Left colon (tissue), 2 donors: ENCODE measurements at regions of chr2 and their contacts with region 1.

Region 1: DNA sequence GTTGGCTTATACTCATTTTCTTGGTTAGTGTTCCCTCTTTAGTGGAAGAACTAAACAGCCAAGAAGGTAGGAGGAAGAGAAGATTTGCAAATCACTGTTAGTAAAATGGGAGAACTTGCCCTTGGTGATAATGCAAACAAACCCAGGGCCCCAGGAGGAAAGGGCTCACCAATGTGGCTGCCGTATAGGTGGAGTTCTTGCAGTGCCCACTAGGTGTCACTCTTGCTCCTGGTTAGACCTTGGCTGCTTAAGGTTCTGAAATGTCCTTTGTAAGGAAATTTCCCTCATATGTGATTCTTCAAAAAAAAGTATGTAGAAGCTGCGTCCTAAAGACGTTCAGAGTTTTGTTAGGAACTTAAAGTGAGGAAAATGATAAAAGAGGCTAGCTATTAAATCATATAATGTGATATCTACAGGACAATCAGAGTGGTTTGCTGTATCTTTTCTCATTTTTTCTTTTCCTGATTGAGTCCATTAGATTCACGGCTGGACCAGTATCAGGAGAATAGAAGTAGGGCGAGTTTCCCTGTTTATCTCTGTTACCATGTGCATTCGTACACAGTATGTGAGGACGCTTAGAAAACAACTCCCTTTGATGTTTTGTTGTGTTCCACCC is 48.6 kb downstream of the RPIA start:
- DNase-seq: peak; percentile 57 to 84
- ATAC-seq: peak; percentile 87

Region 2: DNA sequence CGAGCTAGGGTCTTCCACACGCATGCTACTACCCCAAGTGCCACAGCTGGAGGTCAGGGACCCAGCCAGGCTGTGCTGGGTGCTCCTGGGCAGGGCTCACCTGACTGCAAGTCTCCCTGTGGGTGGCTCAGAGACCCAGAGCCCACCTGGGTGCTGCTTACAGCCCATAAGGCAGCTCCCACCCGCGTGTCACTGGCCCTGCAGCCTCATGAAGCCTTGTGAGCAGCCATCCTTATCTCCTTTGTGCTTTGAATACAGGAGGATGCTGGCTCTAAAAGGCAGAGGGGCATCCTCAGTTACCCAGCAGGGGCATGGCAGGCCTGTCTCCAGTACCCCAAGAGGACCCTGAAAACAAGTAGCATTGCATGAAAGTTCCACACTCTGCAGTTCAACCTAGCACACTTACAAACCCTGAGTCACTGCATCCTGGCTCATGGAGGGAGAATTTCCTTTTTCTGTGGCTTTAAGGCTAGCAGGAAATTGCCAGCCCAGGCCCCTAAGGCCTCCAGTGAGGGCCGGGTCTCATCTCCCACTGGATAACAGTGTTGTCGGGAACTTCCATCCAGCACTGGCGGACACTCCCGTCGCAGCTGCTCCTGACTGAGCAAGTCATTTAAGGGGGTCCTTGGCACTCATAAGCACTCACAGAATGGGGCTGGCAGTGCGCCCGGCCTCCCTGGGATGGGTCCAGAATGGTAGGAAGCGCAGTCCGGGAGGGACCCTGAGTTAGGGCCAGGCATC is 88.5 kb after region 1 on chr2:
- intact Hi-C with region 1: loop called in 1 of 2 experiments (anchors 10 kb)
- DNase-seq: peak in 1 of 2 donors; percentile 20
- ATAC-seq: no peak